ENCODE measurements at regions of chr3 and their contacts with region 1.

Region 1: GRCh38 chr3:46895204-46895660 is 17.7 kb downstream of the PTH1R start:
- DNase-seq: no peak
- H3K4me3 ChIP-seq: no peak overlapping the region
- H3K27ac ChIP-seq: no peak overlapping the region
- H3K27me3 ChIP-seq: peaks cover 48% of the 10 kb centered on the region
- CTCF ChIP-seq: peak; percentile 95

Region 2: DNA sequence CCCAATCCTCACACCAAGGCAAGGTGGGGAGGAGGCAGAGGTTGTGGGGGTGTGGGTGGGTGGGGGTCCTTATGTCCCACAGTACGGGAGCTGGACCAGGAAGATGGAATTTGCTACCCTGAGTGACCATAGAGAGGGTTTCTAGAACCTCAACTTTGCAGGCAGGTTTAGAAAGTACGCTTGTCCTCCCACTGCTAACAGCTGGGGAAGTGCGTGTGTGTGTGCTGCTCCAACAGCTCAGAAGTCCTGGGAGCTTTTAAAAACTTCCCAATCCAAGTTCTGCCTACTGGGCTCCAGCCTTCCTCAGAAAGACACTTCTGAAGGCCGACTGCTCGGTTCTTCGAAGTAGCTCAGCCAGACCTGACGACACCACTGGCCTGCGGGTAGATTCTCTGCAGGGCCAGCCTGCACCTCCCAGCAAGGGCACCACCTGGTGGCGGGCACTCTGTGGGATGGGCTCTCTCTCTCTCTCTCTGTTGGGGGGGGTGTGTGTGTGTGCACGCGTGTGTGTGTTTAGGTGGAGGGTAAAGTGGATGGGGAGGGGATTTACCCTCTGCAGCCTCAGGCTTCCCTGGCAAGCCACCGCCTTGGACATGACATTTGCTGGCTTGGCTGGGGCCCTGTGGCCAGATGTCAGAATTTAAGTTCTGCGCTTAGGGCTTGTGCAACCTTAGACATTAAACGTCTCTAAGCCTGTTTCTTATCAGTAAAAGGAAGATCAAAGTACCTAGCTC is 1684.8 kb before region 1 on chr3:
- CTCF ChIA-PET with region 1: interaction called, 10 read pairs
- POLR2A ChIA-PET with region 1: no interaction called
- DNase-seq: peak; percentile 63
- H3K4me3 ChIP-seq: no peak overlapping the region
- H3K27ac ChIP-seq: no peak overlapping the region
- H3K27me3 ChIP-seq: no peaks in the 10 kb centered on the region
- CTCF ChIP-seq: peak; percentile 84

Region 3: DNA sequence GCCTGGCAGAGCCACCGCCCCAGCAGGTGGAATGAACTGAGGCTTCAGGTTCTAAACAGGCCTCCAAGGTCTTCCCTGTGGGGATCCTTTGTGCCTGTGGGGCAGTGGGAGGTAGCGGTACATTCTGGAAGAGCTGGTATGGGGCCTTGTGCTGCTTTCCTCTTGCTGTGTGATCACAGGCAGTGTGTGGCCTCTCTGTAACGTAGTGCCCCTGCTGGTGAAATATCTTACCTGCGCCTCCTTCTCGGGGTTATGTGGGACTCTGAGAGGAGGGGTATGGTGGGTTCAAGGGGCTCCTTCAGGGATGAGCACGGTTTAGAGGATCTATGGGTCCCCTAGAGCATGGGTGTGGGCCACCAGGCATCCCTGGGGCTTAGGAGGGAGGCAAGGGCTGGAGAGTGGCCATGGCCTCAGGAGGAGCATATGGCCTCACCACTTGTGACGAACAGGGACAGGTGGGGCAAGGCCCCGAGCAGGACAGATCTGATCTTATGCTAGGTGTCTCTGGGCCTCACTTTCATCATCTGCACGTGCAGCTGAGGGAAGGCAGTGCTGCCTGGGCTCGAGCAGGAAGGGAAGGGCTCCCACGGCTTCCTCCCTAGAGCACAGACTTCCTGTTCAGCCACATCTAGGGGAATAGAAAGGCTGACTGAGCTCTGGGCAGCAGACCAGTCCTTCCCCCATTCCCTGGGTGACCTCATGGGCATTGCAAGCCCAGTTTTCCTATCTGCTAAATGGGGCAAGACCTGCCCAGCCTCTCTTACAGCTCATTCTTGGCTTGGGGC is 199.9 kb before region 1 on chr3:
- CTCF ChIA-PET with region 1: interaction called, 14 read pairs
- POLR2A ChIA-PET with region 1: no interaction called
- DNase-seq: no peak
- H3K4me3 ChIP-seq: no peak overlapping the region
- H3K27ac ChIP-seq: no peak overlapping the region
- H3K27me3 ChIP-seq: peaks cover 27% of the 10 kb centered on the region
- CTCF ChIP-seq: peak; percentile 34

Region 4: GRCh38 chr3:46845791-46846623 is 49.2 kb before region 1 on chr3:
- CTCF ChIA-PET with region 1: interaction called, 30 read pairs
- POLR2A ChIA-PET with region 1: interaction called, 3 read pairs
- DNase-seq: peak; percentile 27
- H3K4me3 ChIP-seq: peak overlapping the region; percentile 58
- H3K27ac ChIP-seq: peak overlapping the region; percentile 47
- H3K27me3 ChIP-seq: peaks cover 6% of the 10 kb centered on the region
- CTCF ChIP-seq: peak; percentile 49

Region 5: GRCh38 chr3:46882377-46883053 is 12.7 kb before region 1 on chr3:
- CTCF ChIA-PET with region 1: interaction called, 12 read pairs
- POLR2A ChIA-PET with region 1: no interaction called
- DNase-seq: no peak
- H3K4me3 ChIP-seq: peak overlapping the region; percentile 49
- H3K27ac ChIP-seq: no peak overlapping the region
- H3K27me3 ChIP-seq: peaks cover 61% of the 10 kb centered on the region
- CTCF ChIP-seq: no peak

Measured in AG04450 (cell line).